CD14-positive monocyte (primary cell): ENCODE measurements at regions of chr18 and their contacts with region 1.

Region 1: GRCh38 chr18:77132371-77133050 is at the start of gene MBP:
- DNase-seq: peak in 2 of 3 donors; percentile 37 to 41
- H3K4me3 ChIP-seq: peak within 1 kb of the TSS; percentile 56 to 83 (median 56)
- H3K4me3 Mint-ChIP-seq: peak within 1 kb of the TSS; percentile 98 to 99
- H3K27ac ChIP-seq: peak within 1 kb of the TSS; percentile 99
- H3K27ac Mint-ChIP-seq: peak within 1 kb of the TSS; percentile 99 to 100 (median 100)
- H3K4me1 ChIP-seq: peaks cover 50 to 56% of the 10 kb centered on the region in 2 donors
- H3K4me1 Mint-ChIP-seq: peaks cover 51% of the 10 kb centered on the region
- H3K27me3 ChIP-seq: no peaks in the 10 kb centered on the region
- H3K27me3 Mint-ChIP-seq: peaks cover 0 to 4% (median 4%) of the 10 kb centered on the region in 3 donors
- CTCF ChIP-seq: no peak
- polyA plus RNA-seq, gene MBP: 47.7 to 81.0 (median 50.4) TPM

Region 2: DNA sequence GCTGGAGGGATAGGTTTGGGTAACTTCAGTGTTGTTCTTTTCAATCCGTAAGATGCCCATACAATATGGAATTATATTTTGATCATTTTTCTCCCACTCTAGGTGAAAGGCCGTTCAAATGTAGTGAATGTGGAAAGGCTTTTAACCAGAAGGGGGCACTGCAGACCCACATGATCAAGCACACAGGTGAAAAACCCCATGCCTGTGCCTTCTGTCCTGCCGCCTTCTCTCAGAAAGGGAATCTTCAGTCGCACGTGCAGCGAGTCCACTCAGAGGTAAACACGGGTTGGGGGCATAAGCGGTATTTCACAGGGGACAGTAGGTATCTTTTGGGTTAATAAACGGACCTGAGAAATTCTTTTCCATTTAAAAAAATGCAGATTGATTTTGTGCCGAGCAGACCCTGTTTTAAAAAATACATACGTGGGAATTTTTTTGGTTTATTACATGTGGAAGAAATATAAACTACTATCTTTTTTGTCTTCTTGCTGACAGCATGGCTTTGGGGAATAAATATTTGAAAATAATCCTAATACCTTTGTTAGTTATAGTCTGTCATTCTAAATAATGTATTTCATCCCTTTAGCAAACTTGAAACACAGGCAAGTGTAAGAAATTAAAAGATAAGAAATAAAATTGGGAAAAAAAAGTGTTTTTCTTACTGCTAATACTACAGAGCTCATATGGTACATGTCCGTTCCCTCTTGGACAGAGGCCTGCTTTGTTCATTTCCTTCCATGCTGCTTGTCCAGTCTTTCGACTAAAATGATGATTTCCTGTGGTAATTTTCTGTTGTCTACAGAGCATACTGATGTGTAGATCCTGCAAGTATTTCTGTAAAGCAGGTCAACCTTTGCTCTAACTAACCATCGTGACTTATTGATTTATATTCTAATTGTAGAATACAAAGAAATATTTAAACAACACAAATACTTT is 256.9 kb before region 1 on chr18:
- intact Hi-C with region 1: no loop called
- DNase-seq: peak in 2 of 3 donors; percentile 3 to 4
- H3K4me3 ChIP-seq: no peak overlapping the region
- H3K4me3 Mint-ChIP-seq: no peak overlapping the region
- H3K27ac ChIP-seq: no peak overlapping the region
- H3K27ac Mint-ChIP-seq: peak overlapping the region in 1 of 7 donors; percentile 20
- H3K4me1 ChIP-seq: no peaks in the 10 kb centered on the region
- H3K4me1 Mint-ChIP-seq: no peaks in the 10 kb centered on the region
- H3K27me3 ChIP-seq: no peaks in the 10 kb centered on the region
- H3K27me3 Mint-ChIP-seq: no peaks in the 10 kb centered on the region
- CTCF ChIP-seq: peak; percentile 49

Region 3: DNA sequence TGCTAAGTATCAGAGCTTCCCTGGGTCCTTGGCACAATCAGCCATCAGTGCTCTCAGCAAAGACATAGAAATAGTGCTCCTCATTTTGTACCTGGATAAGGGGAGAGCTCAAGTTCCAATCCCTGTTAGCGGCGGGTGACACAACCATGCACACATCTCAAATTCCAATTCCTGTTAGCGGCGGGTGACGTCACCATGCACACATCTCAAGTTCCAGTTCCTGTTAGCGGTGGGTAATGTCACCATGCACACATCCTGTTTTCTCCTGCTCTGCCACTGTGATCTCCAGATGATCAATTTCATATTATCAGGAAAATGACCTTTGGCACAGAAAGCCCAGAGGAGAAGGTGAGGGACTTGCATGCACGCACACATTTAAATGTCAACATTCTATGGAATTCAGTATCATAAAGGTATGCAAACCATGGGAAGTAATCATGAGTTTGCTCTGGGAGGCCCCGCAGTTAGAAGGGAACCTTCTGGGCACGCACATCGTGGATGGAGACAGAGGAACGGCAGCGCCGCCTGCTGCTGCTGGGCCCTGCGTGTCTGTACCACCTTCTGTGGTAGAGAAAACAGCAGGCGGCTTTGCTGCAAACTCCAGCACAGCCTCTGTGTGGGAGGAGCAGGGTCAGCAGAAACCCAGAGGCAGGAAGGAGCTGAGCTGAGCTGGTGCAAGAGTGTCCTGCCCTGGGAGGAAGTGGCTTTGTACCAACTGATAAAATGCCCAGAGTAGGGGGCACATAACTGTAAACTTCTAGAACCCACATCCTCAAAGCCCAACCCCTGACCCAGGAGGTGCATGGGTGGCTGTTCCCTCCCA is 77.7 kb before region 1 on chr18:
- intact Hi-C with region 1: loop called in 1 of 2 experiments (anchors 2 kb)
- DNase-seq: peak; percentile 94
- H3K4me3 ChIP-seq: peak overlapping the region in 2 of 3 experiments; percentile 15 to 42
- H3K4me3 Mint-ChIP-seq: peak overlapping the region; percentile 69 to 82
- H3K27ac ChIP-seq: peak overlapping the region; percentile 93 to 99
- H3K27ac Mint-ChIP-seq: peak overlapping the region; percentile 98 to 100 (median 99)
- H3K4me1 ChIP-seq: peaks cover 68 to 71% of the 10 kb centered on the region in 2 donors
- H3K4me1 Mint-ChIP-seq: peaks cover 58% of the 10 kb centered on the region
- H3K27me3 ChIP-seq: no peaks in the 10 kb centered on the region
- H3K27me3 Mint-ChIP-seq: peaks cover 0 to 2% (median 0%) of the 10 kb centered on the region in 3 donors
- CTCF ChIP-seq: peak; percentile 70

Region 4: DNA sequence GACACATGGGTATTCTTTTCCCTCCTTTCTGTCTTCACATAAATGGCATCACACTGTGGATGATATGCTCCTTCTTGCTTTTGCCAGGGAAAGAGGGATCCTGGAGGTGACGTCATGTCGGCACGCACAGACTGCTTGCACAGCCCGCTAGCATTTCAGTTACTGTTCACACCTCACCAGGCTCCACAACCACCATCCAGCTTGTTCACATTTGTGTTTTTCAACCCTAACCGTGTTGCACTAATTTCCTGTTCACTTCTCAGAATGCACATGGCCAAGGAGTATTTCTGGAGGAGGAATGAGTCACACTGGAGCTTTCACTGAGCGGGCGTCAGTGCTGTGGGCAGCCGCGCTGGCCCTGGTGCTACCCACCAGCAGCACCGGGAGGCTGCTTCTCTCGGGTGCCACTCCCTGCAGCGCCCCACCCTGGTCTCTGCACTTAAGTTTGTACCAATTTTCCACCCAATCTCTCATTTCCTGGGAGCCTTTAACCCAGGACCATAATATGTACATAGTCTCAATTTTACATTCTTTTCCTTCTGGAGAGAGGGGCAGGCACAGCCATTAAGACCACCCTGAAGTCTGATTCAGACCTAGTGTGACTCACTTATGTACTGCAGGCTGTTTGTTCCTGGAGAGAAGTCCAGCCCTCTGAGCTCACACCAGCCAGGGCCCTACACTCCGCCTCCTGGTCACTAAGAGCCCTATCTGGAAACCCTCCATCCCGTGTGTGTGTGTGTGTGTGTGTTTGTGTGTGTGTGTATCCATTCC is 65.0 kb before region 1 on chr18:
- intact Hi-C with region 1: loop called (anchors 1 to 2 kb)
- DNase-seq: peak; percentile 89 to 93 (median 92)
- H3K4me3 ChIP-seq: no peak overlapping the region
- H3K4me3 Mint-ChIP-seq: peak overlapping the region; percentile 59 to 62
- H3K27ac ChIP-seq: peak overlapping the region; percentile 98 to 100
- H3K27ac Mint-ChIP-seq: peak overlapping the region; percentile 100
- H3K4me1 ChIP-seq: peaks cover 72% of the 10 kb centered on the region in 2 donors
- H3K4me1 Mint-ChIP-seq: peaks cover 89% of the 10 kb centered on the region
- H3K27me3 ChIP-seq: no peaks in the 10 kb centered on the region
- H3K27me3 Mint-ChIP-seq: no peaks in the 10 kb centered on the region
- CTCF ChIP-seq: no peak

Region 5: DNA sequence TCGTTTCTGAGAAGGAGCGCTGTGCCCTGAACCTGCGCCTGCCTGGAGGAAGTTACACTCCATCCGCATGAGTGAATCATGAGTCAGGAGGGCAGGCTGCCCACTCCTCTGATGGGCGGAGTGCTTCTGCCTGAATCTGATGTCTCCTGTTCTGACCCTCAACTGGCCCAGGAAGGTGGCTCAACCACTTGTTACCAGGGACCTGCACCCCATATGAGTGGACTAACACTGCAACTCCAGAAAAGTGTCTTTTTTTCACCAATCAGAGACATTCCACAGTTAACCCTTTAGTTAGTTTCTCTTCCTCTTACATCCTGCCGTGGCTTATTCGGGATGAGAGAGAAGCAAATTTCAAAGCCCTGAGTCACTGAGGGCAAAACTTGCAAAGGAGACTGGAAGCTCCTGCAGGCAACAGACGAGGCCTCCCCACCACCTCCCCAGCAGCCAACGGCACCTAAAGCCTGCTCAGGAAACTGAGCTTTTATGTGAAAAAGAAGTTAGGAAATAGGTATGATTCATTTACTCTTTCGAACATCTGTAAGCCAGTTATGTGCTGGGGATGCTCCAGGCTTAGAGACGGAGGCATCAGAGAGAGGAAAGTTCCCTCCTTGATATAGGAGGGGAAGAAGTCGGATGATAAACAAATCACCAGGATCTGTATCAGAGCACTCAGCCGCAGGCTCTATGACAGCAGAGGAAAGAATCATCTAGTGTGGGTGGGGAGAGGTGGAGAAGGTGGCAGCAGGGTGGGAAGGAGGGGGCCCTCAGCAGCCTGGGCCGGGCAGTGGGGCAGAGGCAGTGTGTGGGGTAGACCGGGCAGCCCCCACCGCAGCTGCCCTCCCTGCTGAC is 30.9 kb before region 1 on chr18:
- intact Hi-C with region 1: loop called in 1 of 2 experiments (anchors 1 kb)
- DNase-seq: peak; percentile 97 to 98 (median 97)
- H3K4me3 ChIP-seq: peak overlapping the region in 1 of 3 experiments; percentile 42
- H3K4me3 Mint-ChIP-seq: peak overlapping the region; percentile 77 to 82
- H3K27ac ChIP-seq: peak overlapping the region; percentile 93 to 99
- H3K27ac Mint-ChIP-seq: peak overlapping the region; percentile 98 to 100 (median 100)
- H3K4me1 ChIP-seq: peaks cover 81 to 94% of the 10 kb centered on the region in 2 donors
- H3K4me1 Mint-ChIP-seq: peaks cover 93% of the 10 kb centered on the region
- H3K27me3 ChIP-seq: no peaks in the 10 kb centered on the region
- H3K27me3 Mint-ChIP-seq: peaks cover 0 to 4% (median 0%) of the 10 kb centered on the region in 3 donors
- CTCF ChIP-seq: no peak

Region 6: DNA sequence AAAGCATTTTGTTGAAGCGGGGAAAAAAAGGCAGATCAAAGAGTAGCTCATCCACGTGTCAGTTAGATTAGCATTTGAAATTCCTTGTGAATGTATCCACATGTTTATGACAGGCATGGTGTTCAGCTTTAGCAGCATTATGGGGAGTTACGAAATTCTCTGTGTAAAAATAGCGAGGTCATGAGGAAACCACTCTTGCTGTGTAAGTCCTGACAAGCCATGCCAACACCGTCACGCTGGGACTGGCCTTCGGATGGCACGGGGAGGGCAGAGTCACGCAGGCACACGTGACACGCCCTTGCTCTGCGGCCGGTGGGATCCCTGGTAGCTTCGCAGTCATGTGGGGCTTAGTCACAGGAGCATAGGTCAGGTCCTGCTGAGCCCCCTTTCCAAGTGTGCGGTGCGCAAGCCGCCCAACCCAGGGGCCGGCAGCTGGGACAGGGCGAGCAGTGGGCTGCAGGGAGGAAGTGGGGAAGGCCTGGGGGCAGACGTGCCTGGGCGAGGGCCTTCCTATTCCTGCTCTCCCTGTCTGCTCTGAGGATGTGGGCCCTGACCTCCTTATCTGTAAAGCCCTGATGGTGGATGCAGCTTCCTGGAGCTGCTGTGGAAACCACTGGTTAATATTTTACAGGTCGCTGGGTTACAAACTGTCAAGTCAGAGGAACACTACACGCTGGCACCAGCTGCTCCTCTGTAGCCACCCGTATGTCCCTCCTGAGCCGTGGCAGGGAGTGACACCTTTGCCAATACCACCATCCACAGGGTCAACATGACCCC is 17.9 kb before region 1 on chr18:
- intact Hi-C with region 1: loop called in 1 of 2 experiments (anchors 2 kb)
- DNase-seq: peak; percentile 100
- H3K4me3 ChIP-seq: peak overlapping the region in 1 of 3 experiments; percentile 29
- H3K4me3 Mint-ChIP-seq: peak overlapping the region; percentile 72 to 76
- H3K27ac ChIP-seq: peak overlapping the region; percentile 97 to 99
- H3K27ac Mint-ChIP-seq: peak overlapping the region; percentile 96 to 99 (median 98)
- H3K4me1 ChIP-seq: peaks cover 76 to 78% of the 10 kb centered on the region in 2 donors
- H3K4me1 Mint-ChIP-seq: peaks cover 82% of the 10 kb centered on the region
- H3K27me3 ChIP-seq: no peaks in the 10 kb centered on the region
- H3K27me3 Mint-ChIP-seq: no peaks in the 10 kb centered on the region
- CTCF ChIP-seq: no peak

Region 7: GRCh38 chr18:77181953-77182707 is 49.6 kb after region 1 on chr18:
- intact Hi-C with region 1: loop called in 1 of 2 experiments (anchors 5 kb)
- DNase-seq: peak; percentile 36 to 72 (median 41)
- H3K4me3 ChIP-seq: no peak overlapping the region
- H3K4me3 Mint-ChIP-seq: no peak overlapping the region
- H3K27ac ChIP-seq: no peak overlapping the region
- H3K27ac Mint-ChIP-seq: peak overlapping the region in 1 of 7 donors; percentile 35
- H3K4me1 ChIP-seq: peaks cover 9 to 14% of the 10 kb centered on the region in 2 donors
- H3K4me1 Mint-ChIP-seq: peaks cover 17% of the 10 kb centered on the region
- H3K27me3 ChIP-seq: no peaks in the 10 kb centered on the region
- H3K27me3 Mint-ChIP-seq: peaks cover 0 to 10% (median 0%) of the 10 kb centered on the region in 3 donors
- CTCF ChIP-seq: no peak

Region 8: DNA sequence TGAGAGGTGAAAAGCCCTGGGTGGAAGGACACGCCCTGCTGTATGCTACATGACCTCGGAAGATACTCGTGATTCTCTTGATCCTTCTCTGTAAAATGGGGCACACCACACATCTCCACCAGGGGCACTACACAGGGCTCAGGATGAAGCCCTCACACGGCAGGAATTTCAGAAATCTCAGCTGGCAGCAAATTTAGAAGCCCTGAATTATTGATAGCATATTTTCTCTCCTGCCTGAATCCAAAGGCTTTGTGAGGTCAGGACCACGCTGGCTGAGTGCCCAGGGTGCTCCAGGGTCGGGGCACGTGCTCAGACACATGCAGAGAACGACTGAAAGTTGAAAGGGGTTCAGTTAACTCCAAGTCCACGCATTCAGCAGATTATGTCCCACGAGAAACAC is 75.0 kb after region 1 on chr18:
- intact Hi-C with region 1: loop called in 1 of 2 experiments (anchors 5 kb)
- DNase-seq: peak; percentile 53 to 69 (median 62)
- H3K4me3 ChIP-seq: no peak overlapping the region
- H3K4me3 Mint-ChIP-seq: no peak overlapping the region
- H3K27ac ChIP-seq: no peak overlapping the region
- H3K27ac Mint-ChIP-seq: peak overlapping the region; percentile 28 to 94 (median 64)
- H3K4me1 ChIP-seq: peaks cover 22 to 38% of the 10 kb centered on the region in 2 donors
- H3K4me1 Mint-ChIP-seq: peaks cover 44% of the 10 kb centered on the region
- H3K27me3 ChIP-seq: no peaks in the 10 kb centered on the region
- H3K27me3 Mint-ChIP-seq: peaks cover 0 to 2% (median 0%) of the 10 kb centered on the region in 3 donors
- CTCF ChIP-seq: peak; percentile 70

Region 9: GRCh38 chr18:77337604-77338003 is 205.1 kb after region 1 on chr18:
- intact Hi-C with region 1: no loop called
- DNase-seq: no peak
- H3K4me3 ChIP-seq: no peak overlapping the region
- H3K4me3 Mint-ChIP-seq: no peak overlapping the region
- H3K27ac ChIP-seq: no peak overlapping the region
- H3K27ac Mint-ChIP-seq: no peak overlapping the region
- H3K4me1 ChIP-seq: no peaks in the 10 kb centered on the region
- H3K4me1 Mint-ChIP-seq: no peaks in the 10 kb centered on the region
- H3K27me3 ChIP-seq: no peaks in the 10 kb centered on the region
- H3K27me3 Mint-ChIP-seq: peaks cover 5 to 11% (median 6%) of the 10 kb centered on the region in 3 donors
- CTCF ChIP-seq: no peak